ENCODE measurements at regions of chr6 and their contacts with region 1.

Region 1: DNA sequence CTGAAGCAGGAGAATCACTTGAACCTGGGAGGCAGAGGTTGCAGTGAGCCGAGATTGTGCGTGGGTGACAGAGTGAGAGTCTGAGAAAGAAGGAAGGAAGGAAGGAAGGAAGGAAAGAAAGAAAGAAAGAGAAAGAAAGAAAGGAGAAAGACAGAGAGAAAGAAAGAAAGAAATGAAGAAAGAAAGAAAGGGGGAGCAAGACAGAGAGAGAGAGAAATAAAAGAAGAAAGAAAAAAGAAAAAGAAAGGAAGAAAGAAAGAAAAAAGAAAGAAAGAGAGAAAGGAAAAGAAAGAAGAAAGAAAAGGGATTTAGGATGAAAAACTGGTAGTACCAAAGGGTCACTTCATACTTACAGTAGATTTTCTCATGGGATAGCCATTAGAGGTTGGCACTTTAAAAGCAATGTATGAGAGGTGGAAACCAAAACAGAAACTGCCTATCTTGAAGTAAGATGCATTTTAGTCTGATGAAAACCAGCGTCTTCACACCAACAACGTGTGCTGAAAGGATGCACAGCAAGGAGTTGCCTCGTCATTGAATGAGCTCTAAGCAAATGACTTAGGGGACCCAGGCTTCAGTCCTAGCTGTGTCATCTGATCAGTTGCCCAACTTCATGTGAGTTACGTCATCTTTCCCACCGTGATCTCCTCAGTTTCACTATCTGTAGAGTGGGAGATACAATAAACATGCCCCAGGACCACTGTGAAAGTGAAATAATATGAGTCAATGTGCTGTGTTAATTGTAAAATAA is 133.9 kb upstream of the NEDD9 start:
- DNase-seq: no peak
- ATAC-seq: no peak

Region 2: GRCh38 chr6:11404838-11405237 is 38.5 kb after region 1 on chr6:
- intact Hi-C with region 1: no loop called
- DNase-seq: no peak
- ATAC-seq: peak; percentile 59

Region 3: DNA sequence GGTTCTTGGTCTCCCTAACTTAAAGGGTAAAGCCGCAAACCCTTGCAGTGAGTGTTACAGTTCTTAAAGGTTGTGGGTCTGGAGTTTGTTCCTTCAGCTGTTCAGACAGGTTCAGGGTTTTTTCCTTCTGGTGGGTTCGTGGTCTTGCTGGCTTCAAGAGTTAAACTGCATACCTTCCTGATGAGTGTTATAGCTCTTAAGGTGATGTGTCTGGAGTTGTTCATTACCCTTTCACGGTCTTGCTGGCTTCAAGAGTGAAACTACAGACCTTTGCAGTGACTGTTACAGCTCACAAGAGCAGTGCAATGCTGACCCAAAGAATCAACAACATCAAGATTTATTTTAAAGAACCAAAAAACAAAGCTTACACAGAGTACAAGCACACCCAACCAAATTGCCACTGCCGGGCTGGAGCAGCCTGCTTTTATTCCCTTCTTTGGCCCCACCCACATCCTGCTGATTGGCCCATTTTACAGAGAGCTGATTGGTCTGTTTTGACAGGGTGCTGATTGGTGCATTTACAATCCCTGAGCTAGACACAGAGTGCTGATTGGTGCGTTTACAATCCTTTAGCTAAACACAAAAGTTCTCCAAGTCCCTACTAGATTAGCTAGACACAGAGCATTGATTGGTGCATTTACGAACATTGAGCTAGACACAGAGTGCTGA is 49.9 kb after region 1 on chr6:
- intact Hi-C with region 1: loop called (anchors 5 kb)
- DNase-seq: no peak
- ATAC-seq: no peak

Region 4: DNA sequence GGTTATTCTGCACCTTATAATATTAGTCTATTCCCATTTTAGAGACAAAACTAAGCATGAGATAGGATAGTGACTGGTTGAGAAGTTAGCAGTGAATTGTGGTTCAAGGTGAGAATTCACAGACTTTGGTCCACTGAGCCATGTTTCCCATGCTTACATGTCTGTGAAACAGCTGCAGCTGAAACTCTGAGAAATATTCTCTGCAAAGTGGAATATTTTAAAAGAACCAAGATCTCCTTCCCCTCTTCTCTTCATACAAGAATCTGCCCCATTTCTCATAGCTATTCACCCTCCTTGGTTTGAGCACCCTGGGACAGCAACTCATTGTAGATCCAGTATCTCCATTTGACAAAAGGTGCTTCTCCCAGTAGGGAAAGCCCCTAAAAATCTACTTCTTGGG is 101.0 kb after region 1 on chr6:
- intact Hi-C with region 1: no loop called
- DNase-seq: no peak
- ATAC-seq: no peak

Measured in Right ventricle myocardium inferior (tissue), 1 donor.